ENCODE measurements at regions of chr11 and their contacts with region 1.

Region 1: GRCh38 chr11:24295360-24295759 is 201.5 kb upstream of the LUZP2 start:
- DNase-seq: no peak
- ATAC-seq: no peak

Region 2: DNA sequence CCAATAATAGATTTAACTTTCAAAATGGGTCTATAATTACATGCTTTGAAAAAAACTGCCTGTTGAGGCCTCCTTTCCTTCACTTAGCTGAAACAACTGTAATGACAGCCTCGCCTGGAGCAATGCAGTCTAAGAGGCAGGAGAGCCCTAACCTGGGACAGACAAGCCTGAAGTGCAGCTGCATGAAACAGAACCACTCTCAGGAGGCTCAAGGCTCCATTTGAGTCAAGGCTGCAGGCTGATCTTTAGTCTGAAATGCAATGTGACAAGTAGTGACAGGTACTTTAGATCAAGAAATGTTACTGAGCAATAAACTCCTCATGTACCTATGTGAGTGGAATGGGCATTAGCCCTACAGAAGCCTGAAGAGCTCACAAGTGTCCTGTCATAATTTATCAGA is 212.5 kb before region 1 on chr11:
- intact Hi-C with region 1: no loop called
- DNase-seq: no peak
- ATAC-seq: no peak

Region 3: GRCh38 chr11:24253237-24253760 is 42.1 kb before region 1 on chr11:
- intact Hi-C with region 1: loop called (anchors 5 kb)
- DNase-seq: no peak
- ATAC-seq: no peak

Region 4: DNA sequence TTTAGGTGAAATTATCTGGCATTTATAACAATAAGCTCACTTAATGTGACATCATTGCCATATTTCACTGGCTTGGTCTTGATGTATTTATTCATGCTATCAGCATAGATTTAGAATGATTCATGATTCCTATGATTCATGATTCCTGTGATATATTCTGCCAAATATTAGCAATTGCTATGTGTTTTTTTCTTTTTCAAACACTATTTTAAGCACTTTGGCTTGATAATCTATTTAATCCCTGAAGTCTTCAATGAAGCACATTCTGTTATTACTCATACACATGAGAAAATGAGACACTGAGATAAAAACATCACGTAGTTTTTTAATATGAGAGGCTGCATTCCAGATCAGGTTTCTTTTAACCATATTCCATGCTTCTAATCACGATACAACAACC is 280.0 kb after region 1 on chr11:
- intact Hi-C with region 1: no loop called
- DNase-seq: no peak
- ATAC-seq: no peak